ENCODE measurements at regions of chr2 and their contacts with region 1.

Region 1: DNA sequence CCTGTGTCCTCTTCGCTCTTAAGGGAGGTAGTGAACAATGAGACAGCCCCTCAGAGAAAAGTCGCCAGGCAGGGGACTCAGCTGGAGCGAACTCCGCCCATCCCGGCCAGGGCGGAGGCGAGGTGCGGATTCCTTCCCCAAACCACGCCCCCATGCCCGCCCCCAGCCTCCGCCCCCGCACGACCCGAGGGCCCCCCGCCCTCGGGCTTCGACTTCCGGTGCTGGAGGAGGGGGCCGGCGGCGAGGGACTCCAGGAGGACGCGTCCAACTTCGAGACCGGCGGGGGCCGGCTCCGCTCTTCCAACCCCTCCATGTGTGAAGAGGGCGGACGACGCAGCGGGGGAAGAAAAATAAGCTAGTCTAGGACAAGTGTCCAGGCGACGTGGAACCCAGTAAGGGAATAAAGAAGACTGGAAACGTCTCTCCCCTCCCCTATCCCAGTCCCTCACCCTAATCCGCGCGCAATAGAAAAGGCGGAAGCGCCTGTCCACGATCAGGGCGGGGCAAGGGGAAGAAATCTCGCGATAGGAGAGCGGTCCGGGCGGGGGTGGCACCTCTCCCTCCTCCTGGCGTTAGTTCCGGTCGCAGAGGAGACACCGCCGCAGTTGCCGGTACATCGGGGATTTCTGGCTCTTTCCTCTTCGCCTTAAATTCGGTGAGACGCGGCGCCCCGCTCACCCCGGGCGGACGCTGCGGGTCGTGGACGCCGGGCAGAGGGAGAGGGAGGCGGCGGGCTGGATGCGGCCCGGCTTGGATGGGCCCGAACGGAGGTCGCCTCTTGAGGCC is at the start of gene BZW1:
- DNase-seq: peak; percentile 96
- H3K4me3 Mint-ChIP-seq: peak within 1 kb of the TSS; percentile 100
- H3K27ac Mint-ChIP-seq: peak within 1 kb of the TSS; percentile 99
- H3K4me1 Mint-ChIP-seq: peaks cover 58% of the 10 kb centered on the region
- H3K27me3 Mint-ChIP-seq: no peaks in the 10 kb centered on the region
- total RNA-seq, gene BZW1: 446 and 447 TPM in 2 replicates

Region 2: DNA sequence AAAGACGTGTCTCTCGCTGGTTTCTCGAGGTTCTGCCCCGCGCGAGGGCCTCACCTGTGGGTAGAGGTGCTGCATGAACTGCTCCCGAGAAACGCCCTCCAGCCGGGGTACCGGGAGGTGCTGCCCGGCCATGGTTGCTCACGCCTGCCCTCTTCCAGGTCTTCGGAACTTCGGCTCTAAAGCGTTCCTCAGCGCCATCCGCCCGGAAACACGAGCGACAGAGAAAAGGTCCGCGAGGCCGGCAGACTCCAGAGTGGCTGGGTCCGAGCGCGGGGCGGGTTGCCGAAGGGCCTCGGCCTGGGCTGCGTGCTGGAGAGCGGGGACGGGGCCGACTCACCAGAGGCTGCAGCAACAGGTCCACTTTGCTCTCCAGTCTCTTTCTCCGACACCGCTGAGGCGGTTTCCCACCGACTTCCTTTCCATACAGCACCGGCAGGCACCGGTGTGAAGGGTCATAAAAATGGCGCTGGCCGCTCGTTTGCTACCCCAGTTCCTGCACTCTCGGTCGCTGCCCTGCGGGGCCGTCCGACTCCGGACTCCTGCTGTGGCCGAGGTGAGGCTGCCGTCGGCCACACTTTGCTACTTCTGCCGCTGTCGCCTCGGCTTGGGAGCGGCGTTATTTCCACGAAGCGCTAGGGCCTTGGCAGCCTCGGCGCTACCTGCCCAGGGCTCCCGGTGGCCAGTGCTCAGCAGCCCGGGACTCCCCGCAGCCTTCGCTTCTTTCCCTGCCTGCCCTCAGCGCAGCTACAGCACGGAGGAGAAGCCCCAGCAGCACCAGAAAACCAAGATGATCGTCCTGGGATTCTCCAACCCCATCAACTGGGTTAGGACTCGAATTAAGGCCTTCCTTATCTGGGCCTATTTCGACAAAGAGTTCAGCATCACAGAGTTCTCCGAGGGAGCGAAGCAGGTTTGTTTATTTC is 855.9 kb before region 1 on chr2 and contains the starts of genes MAIP1 and TYW5:
- intact Hi-C with region 1: loop called (anchors 5 kb)
- DNase-seq: peak; percentile 73
- H3K4me3 Mint-ChIP-seq: peak within 1 kb of the TSS; percentile 99
- H3K27ac Mint-ChIP-seq: peak within 1 kb of the TSS; percentile 93
- H3K4me1 Mint-ChIP-seq: peaks cover 62% of the 10 kb centered on the region
- H3K27me3 Mint-ChIP-seq: no peaks in the 10 kb centered on the region
- total RNA-seq, gene MAIP1: 24.7 and 27.1 TPM in 2 replicates
- total RNA-seq, gene TYW5: 11.7 and 13.9 TPM in 2 replicates

Region 3: DNA sequence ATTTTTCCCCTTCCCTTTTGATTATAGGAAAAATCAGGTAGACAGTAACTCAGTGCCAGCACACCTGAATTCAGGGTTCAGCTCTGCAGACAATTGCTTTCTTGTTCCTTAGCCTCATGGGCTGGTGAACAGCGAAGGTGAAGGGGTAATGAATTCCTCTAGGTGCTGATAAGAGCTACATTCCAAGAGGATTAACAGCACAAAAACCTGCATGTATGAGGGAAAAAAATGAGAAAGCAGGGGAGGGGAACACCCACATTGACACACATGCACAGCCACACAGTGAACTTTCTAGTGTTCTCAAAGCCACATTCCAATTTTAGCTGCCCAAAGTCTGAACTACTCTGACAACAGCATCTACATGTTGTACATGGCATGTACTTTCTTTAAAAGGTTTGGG is 458.9 kb before region 1 on chr2:
- intact Hi-C with region 1: no loop called
- DNase-seq: no peak
- H3K4me3 Mint-ChIP-seq: no peak overlapping the region
- H3K27ac Mint-ChIP-seq: no peak overlapping the region
- H3K4me1 Mint-ChIP-seq: no peaks in the 10 kb centered on the region
- H3K27me3 Mint-ChIP-seq: peaks cover 6% of the 10 kb centered on the region

Region 4: DNA sequence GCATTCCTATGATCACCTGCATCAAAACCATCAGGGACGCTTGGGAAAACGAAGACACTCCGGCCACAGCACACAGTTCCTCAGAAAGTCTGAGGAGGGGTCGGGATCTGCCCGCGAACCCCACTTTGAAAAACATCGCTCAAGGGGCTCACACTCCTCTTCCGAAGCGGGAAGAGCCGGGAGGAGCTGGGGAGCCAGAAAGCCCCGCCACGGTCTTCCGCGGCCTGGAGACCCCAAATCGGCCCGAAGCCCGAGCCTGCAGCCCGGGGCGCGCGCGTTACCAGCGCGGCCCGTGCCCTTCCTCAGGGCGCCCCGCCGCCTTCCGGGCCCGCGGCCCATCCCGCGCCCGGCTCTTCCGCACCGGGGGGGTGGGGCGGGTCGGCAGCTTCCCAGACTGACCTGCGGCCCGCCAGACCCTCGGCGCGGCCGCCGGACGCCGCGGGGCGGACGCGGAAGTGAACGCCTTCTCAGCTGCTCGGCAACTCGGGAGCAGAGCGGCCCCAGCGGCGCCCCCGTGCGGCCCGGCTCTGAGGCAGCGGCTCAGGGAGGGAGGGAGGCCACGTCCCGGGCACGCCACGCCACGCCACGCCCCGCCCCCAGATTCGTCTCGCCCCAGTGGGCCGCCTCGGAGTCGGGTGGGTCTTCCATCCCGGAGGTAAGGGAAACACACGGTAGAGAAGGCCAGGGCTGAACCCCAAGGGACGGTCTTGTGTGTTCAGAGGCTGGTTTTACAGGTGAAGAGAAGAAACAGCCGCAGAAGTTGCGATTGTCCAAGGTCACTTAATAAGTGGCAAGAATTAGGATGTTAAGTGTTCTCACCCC is 301.7 kb before region 1 on chr2 and contains the start of gene KCTD18:
- intact Hi-C with region 1: loop called (anchors 5 kb)
- DNase-seq: peak; percentile 90
- H3K4me3 Mint-ChIP-seq: peak within 1 kb of the TSS; percentile 96
- H3K27ac Mint-ChIP-seq: peak within 1 kb of the TSS; percentile 90
- H3K4me1 Mint-ChIP-seq: peaks cover 21% of the 10 kb centered on the region
- H3K27me3 Mint-ChIP-seq: no peaks in the 10 kb centered on the region
- total RNA-seq, gene KCTD18: 14.5 and 15.8 TPM in 2 replicates

Region 5: DNA sequence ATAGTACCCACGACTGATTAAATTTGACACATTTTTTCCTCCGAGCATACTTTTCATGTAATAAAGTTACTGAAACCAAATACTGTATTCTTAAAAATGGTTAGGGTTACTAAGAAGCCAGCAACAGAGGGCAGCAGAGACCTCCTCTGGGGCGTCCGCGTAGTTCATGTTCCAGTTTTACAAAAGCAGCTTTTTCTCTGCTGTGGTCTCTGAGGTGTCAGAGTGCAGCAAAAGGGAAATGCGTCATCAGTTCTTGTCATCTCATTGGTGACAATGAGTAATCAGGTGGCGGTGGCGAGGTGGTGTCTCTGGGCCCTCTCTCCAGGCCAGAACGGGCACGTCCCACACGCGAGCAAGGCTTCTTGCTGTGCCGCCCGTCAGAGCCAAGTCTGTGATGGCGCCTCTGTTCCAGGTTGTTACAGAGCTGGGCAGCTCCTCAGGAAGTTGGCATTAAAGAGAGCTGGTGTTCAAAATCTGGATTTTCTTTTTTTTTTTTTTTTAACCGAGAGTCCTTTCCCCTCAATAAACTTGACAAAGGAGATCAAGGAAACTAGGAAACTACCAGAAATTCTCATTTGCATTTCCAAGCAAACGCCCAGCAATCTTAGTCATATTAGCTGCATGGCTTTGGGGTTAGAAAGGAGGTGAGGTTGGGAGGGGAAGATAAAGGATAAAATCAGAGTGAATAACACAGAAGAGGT is 98.4 kb before region 1 on chr2:
- intact Hi-C with region 1: loop called (anchors 1 kb)
- DNase-seq: peak; percentile 89
- H3K4me3 Mint-ChIP-seq: peak overlapping the region; percentile 79
- H3K27ac Mint-ChIP-seq: peak overlapping the region; percentile 99
- H3K4me1 Mint-ChIP-seq: peaks cover 44% of the 10 kb centered on the region
- H3K27me3 Mint-ChIP-seq: no peaks in the 10 kb centered on the region

Region 6: DNA sequence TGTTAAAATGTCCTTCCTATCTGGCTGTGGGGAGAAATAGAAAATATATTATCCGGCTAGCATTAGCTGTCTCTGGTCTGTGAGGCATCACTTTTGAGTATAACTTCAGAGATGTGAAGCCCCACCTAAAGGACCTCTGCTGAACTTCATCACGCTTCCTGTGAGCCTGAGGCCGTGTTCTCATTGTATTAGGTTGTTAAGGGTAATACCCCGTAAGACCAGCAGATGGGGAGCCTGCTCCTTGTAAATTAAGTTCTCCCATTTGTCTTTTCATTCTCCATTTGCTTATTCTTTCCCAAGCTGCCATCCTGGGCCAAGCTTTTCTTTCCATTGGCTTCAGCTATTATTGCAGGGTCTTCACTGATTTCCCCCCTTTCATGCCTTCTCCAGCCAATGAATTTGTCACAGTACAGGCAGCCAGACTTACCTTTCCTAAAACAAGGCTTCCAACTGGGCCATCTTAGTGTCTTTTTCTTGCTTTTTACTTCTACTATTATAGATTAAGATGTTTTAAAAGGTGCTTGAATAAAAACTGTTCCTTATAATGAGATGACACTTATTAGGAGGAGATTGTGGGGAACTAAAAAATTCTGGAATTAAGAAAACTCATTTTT is 90.0 kb after region 1 on chr2:
- intact Hi-C with region 1: no loop called
- DNase-seq: peak; percentile 68
- H3K4me3 Mint-ChIP-seq: no peak overlapping the region
- H3K27ac Mint-ChIP-seq: peak overlapping the region; percentile 59
- H3K4me1 Mint-ChIP-seq: peaks cover 18% of the 10 kb centered on the region
- H3K27me3 Mint-ChIP-seq: no peaks in the 10 kb centered on the region

Region 7: GRCh38 chr2:200963124-200963917 is 151.8 kb after region 1 on chr2 and contains the start of gene ORC2:
- intact Hi-C with region 1: loop called (anchors 2 kb)
- DNase-seq: peak; percentile 93
- H3K4me3 Mint-ChIP-seq: peak within 1 kb of the TSS; percentile 97
- H3K27ac Mint-ChIP-seq: peak within 1 kb of the TSS; percentile 93
- H3K4me1 Mint-ChIP-seq: peaks cover 58% of the 10 kb centered on the region
- H3K27me3 Mint-ChIP-seq: no peaks in the 10 kb centered on the region
- total RNA-seq, gene ORC2: 63.1 and 63.3 TPM in 2 replicates

Region 8: GRCh38 chr2:201257956-201258665 is 446.6 kb after region 1 on chr2:
- intact Hi-C with region 1: loop called (anchors 5 kb)
- DNase-seq: peak; percentile 93
- H3K4me3 Mint-ChIP-seq: peak overlapping the region; percentile 91
- H3K27ac Mint-ChIP-seq: peak overlapping the region; percentile 100
- H3K4me1 Mint-ChIP-seq: peaks cover 84% of the 10 kb centered on the region
- H3K27me3 Mint-ChIP-seq: no peaks in the 10 kb centered on the region

Measured in activated T-helper 1 cell treated with anti-CD3 and anti-CD28 coated beads, Interleukin-12 subunit alpha, Interleukin-12 subunit beta, Interleukin-2, Interleukin-4 antibody, amounts not matched to agents 30 ng/mL and 10 ng/mL and 1 ng/mL, durations not matched to agents 14 hours and 24 hours and 36 hours (primary cell).